Heart right ventricle (tissue), 16 donors: ENCODE measurements at regions of chr12 and their contacts with region 1.

Region 1: DNA sequence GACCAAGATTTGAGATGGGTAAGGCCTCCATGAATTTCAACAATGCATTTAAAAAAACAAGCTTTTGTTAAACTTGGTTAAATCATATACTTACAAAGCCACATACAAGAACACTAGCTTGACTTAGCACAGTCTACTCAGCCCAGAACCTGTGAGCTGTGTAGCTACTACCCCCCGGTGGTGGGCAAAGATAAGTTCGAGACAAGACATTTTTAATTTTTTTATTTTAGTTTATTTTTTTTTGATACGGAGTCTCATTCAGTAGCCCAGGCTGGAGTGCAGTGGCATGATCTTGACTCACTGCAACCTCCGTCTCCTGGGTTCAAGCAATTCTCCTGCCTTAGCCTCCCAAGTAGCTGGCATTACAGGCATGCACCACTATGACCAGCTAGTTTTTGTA is 3.7 kb upstream of the NECAP1 start:
- DNase-seq: no peak
- ATAC-seq: no peak
- H3K4me3 ChIP-seq: no peak overlapping the region
- H3K27ac ChIP-seq: no peak overlapping the region
- H3K4me1 ChIP-seq: peaks cover 0 to 44% (median 15%) of the 10 kb centered on the region in 9 donors
- H3K27me3 ChIP-seq: peaks cover 0 to 3% (median 0%) of the 10 kb centered on the region in 7 donors
- CTCF ChIP-seq: peak in 6 of 9 donors; percentile 21 to 46 (median 34)

Region 2: GRCh38 chr12:7994731-7995205 is 83.6 kb before region 1 on chr12:
- intact Hi-C with region 1: no loop called
- DNase-seq: no peak
- ATAC-seq: peak in 6 of 8 donors; percentile 13 to 56 (median 23)
- H3K4me3 ChIP-seq: no peak overlapping the region
- H3K27ac ChIP-seq: peak overlapping the region in 7 of 10 donors; percentile 18 to 71 (median 51)
- H3K4me1 ChIP-seq: peaks cover 0 to 47% (median 0%) of the 10 kb centered on the region in 9 donors
- H3K27me3 ChIP-seq: no peaks in the 10 kb centered on the region
- CTCF ChIP-seq: no peak

Region 3: DNA sequence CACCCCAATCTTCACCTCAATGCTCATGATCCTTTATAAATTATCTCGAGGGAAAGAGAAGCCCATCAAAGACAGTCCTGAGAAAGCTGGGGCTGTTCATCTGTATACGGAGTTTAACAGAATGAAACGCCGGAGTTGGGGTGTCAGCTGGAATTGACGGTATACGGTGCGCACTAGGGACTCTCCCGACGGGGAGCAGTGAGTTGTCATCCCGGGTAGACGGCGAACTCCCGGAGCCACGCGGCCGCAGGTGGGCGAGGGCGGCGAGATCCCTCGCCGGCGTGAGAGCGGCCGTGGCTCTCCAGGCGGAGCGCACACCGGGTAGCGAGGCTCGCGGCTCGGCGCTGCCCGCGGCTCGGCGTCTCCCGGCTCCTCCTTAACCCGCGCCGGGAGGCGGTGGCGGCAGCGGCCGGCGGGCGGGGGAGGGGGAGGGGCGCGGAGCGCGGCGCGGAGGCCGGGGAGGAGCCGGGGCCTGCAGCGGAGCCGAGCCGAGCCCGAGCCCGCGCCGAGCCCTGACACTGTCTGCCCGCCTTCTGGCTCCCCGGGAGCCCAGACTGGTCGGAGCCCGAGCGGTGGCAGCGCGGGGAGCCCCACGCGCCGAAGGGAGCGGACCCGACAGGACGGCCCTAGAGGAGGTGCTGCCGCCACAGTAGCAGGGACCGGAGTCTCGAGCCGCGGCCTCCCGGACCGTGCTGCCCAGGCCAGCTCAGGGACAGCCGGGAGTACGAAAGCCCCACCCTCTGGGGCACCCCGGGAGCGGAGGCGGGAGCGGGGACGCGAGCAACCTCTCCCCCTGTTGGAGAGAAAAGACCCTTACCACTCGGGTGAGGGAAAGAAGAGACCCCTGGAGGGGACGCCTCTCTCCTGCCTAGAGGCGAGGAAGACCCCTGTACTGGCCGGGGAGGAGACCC is 45.9 kb before region 1 on chr12 and contains the start of gene FOXJ2:
- intact Hi-C with region 1: loop called in 5 of 10 experiments (anchors 2 to 5 kb)
- DNase-seq: peak; percentile 81 to 87
- ATAC-seq: peak; percentile 77 to 96 (median 87)
- H3K4me3 ChIP-seq: peak within 1 kb of the TSS; percentile 70 to 99 (median 86)
- H3K27ac ChIP-seq: peak within 1 kb of the TSS; percentile 78 to 99 (median 98)
- H3K4me1 ChIP-seq: peaks cover 17 to 58% (median 48%) of the 10 kb centered on the region in 9 donors
- H3K27me3 ChIP-seq: no peaks in the 10 kb centered on the region
- CTCF ChIP-seq: peak in 3 of 9 donors; percentile 6 to 33 (median 26)
- total RNA-seq, gene FOXJ2: 22.1 to 29.4 (median 24.6) TPM

Region 4: GRCh38 chr12:8038659-8039114 is 39.7 kb before region 1 on chr12:
- intact Hi-C with region 1: loop called in 6 of 10 experiments (anchors 2 to 5 kb)
- DNase-seq: peak; percentile 60 to 67
- ATAC-seq: peak; percentile 80 to 93 (median 88)
- H3K4me3 ChIP-seq: peak overlapping the region in 7 of 10 donors; percentile 10 to 44 (median 27)
- H3K27ac ChIP-seq: peak overlapping the region in 9 of 10 donors; percentile 57 to 99 (median 97)
- H3K4me1 ChIP-seq: peaks cover 23 to 65% (median 59%) of the 10 kb centered on the region in 9 donors
- H3K27me3 ChIP-seq: no peaks in the 10 kb centered on the region
- CTCF ChIP-seq: no peak

Region 5: GRCh38 chr12:8045952-8046944 is 32.1 kb before region 1 on chr12:
- intact Hi-C with region 1: loop called in 2 of 10 experiments (anchors 5 kb)
- DNase-seq: peak; percentile 69 to 79
- ATAC-seq: peak in 7 of 8 donors; percentile 26 to 74 (median 67)
- H3K4me3 ChIP-seq: no peak overlapping the region
- H3K27ac ChIP-seq: no peak overlapping the region
- H3K4me1 ChIP-seq: peaks cover 0 to 14% (median 0%) of the 10 kb centered on the region in 9 donors
- H3K27me3 ChIP-seq: no peaks in the 10 kb centered on the region
- CTCF ChIP-seq: peak; percentile 71 to 92 (median 87)

Region 6: DNA sequence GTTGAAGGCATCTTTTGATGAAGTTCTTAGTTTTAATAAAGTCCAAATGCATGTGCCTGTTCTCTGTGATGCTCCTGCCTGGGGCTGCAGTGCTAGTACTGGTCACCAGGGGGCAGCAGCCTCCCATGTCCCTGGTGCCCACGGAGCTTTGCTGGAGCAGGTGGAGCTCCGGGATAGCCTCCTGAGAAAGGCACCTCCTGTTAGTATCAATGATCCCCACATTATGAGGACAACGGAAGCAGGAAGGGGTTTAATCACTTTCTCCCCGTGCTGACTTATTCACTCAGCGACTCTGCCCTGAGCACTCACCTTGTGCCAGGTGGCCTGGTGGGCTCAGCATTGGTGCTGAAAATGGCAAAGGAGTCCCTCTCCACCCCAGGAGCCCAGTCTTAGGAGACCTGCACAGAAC is 1252.8 kb after region 1 on chr12:
- intact Hi-C with region 1: no loop called
- DNase-seq: peak; percentile 34 to 74
- ATAC-seq: peak; percentile 67 to 82 (median 79)
- H3K4me3 ChIP-seq: no peak overlapping the region
- H3K27ac ChIP-seq: no peak overlapping the region
- H3K4me1 ChIP-seq: peaks cover 0 to 4% (median 0%) of the 10 kb centered on the region in 9 donors
- H3K27me3 ChIP-seq: peaks cover 0 to 7% (median 0%) of the 10 kb centered on the region in 7 donors
- CTCF ChIP-seq: peak; percentile 85 to 99 (median 94)